Activated naive CD4-positive, alpha-beta T cell treated with anti-CD3 and anti-CD28 coated beads for 36 hours (primary cell): ENCODE measurements at regions of chr20 and their contacts with region 1.

Region 1: DNA sequence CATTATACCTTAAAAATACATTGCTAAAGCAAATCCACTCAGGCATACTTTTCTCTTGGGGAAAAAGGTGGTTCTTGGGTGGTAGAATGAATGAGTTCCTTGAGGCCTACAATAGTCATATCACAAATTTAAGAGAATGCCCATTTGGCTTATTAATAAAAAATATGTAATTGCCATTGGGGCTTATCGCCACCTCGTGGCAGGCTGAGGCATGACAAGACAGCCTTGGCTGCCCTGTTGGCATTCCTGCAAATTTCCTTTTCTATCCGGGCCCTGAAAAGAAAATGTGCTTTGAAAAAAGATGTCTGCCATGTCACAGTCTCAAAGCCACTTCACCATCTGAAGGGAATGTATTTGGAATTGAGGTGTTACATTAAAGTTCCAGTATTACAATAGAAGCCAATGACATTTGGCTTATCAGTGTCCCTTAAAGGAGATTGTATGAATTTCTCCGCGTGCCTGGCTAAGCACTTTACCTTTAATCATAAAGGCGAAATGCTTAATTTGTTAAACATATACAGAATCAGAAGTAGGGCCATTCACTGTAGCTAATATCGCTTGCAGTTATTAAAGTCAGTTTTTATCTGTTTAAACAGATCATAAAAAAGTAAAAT is 188.3 kb upstream of the ZFP64 start:
- DNase-seq: peak; percentile 52
- H3K4me3 Mint-ChIP-seq: no peak overlapping the region
- H3K27ac Mint-ChIP-seq: no peak overlapping the region
- H3K4me1 Mint-ChIP-seq: peaks cover 14% of the 10 kb centered on the region
- H3K27me3 Mint-ChIP-seq: no peaks in the 10 kb centered on the region

Region 2: DNA sequence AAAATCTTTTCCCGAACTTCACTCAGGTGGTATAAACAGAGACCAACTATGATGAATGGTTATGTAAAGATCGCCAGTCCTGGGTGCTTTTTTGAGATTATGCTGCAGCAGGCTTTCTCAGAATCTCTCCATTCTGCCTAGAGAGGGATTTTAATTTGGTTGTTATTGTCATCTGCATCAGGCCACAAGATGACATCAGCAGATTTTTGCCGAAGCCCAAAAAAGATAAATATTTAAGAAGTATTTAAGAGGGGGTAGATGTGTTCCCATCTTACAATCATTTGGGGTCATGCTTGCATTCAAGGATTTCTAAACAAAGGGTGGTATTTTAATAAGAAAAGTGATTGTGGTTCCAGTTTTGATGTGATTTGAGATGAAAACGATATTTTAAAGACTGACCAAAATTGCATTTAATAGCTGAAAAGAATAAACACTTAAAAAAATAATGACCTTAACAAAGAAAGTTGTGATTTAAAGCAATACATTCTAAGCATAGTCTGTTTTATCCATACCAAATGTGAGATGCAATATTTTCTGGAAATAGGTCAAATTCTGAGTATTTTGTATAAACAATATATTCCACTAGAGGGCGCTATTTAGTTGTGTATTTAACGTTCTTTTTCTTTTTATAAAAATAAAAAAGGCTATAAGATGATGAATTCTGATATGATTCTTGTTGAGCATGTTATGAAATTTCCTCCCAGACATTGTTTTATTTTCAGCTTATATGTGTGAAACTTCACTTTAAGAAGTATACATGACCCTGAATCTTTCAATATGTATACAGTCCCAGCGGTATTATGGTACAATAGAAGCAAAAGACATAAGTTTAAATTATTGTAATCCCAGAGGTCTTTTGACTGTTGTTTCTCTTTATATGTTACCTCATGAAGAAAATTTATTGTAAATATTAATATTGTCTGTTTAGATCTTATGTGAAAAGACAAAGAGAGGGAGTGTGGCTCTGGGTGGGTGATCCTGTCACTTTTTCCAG is 137.3 kb before region 1 on chr20:
- CTCF ChIA-PET with region 1: interaction called, 4 read pairs
- intact Hi-C with region 1: loop called (anchors 1 kb)
- DNase-seq: no peak
- H3K4me3 Mint-ChIP-seq: no peak overlapping the region
- H3K27ac Mint-ChIP-seq: no peak overlapping the region
- H3K4me1 Mint-ChIP-seq: no peaks in the 10 kb centered on the region
- H3K27me3 Mint-ChIP-seq: no peaks in the 10 kb centered on the region

Region 3: DNA sequence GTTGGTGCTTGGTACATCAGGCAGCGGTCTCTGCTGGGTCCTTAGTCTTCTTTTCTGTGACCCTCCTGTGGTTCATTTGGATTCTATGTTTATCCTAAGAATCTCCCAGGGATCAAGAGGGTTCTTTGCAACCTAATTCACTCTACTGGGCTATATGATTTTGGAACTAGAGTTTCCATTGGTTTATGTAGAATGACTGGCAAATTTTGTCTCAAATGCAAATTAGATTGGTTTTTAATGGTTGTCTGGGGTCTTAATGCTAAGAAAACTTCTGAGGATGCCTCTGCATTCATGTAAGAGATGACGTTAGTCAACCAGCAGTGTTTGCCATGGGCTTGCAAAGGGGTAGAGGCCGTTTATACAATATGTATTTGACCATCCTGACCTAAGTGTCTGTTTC is 58.4 kb before region 1 on chr20:
- CTCF ChIA-PET with region 1: no interaction called
- intact Hi-C with region 1: no loop called
- DNase-seq: no peak
- H3K4me3 Mint-ChIP-seq: no peak overlapping the region
- H3K27ac Mint-ChIP-seq: no peak overlapping the region
- H3K4me1 Mint-ChIP-seq: no peaks in the 10 kb centered on the region
- H3K27me3 Mint-ChIP-seq: no peaks in the 10 kb centered on the region

Region 4: GRCh38 chr20:52484438-52484837 is 104.6 kb after region 1 on chr20:
- CTCF ChIA-PET with region 1: no interaction called
- intact Hi-C with region 1: no loop called
- DNase-seq: no peak
- H3K4me3 Mint-ChIP-seq: no peak overlapping the region
- H3K27ac Mint-ChIP-seq: no peak overlapping the region
- H3K4me1 Mint-ChIP-seq: peaks cover 2% of the 10 kb centered on the region
- H3K27me3 Mint-ChIP-seq: no peaks in the 10 kb centered on the region

Region 5: DNA sequence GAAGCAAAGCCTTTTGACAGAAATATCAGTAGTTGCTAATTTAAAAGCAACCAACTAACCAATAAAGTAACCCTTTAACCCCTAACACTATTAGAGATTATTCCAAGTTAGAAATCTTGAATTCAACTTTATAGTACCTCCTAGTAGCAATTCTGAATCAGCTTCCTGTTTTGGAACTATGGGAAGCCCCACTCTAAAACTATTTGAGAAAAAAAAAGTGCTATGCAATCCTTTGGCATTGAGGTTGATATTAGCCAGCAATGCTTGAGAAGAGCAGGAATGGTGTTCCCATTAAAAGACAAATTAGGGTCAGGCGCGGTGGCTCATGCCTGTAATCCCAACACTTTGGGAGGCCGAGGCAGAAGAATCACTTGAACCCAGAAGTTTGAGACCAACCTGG is 117.9 kb after region 1 on chr20:
- CTCF ChIA-PET with region 1: no interaction called
- intact Hi-C with region 1: no loop called
- DNase-seq: no peak
- H3K4me3 Mint-ChIP-seq: no peak overlapping the region
- H3K27ac Mint-ChIP-seq: no peak overlapping the region
- H3K4me1 Mint-ChIP-seq: peaks cover 23% of the 10 kb centered on the region
- H3K27me3 Mint-ChIP-seq: no peaks in the 10 kb centered on the region